H1 (cell line): ENCODE measurements at regions of chr12 and their contacts with region 1.

Region 1: GRCh38 chr12:101839324-101840283 is 8.8 kb upstream of the GNPTAB start:
- DNase-seq: peak in 1 of 2 experiments; percentile 81
- H3K4me3 ChIP-seq: no peak overlapping the region
- H3K27ac ChIP-seq: no peak overlapping the region
- H3K4me1 ChIP-seq: no peaks in the 10 kb centered on the region
- H3K27me3 ChIP-seq: no peaks in the 10 kb centered on the region
- CTCF ChIP-seq: peak; percentile 60 to 74 (median 66)
- EP300 ChIP-seq: no peak
- POLR2A ChIP-seq: no peak
- RAD21 ChIP-seq: peak; percentile 76 to 77

Region 2: DNA sequence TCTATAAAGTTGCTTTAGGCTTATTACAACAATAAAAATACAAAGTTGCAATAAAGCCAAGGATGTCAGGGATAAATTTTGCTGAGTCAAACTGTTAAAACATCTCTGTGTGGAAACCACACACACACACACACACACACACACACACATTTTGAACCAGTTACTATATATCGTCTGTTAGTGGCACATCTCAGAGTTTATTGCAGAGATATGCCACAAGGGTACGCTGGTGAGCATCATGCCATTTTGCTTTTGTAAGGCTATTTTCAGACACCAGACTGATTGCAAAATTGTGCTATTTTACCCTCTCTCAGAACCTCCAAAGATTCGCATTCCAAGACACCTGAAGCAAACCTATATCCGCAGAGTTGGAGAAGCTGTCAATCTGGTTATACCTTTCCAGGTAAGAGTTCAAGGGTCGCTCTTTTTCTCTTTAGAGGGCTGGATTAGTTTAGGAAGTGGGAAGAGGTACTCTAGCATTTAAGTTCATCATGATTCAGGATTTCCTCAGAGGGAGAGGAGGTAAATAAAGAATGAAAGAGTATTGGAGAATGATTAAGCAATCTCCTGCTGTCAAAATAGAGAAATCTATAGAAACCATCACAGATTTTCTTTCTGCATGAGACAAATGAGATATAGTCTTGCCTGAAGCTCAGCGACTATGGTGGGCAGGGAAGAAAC is 169.5 kb before region 1 on chr12:
- CTCF ChIA-PET with region 1: no interaction called
- POLR2A ChIA-PET with region 1: no interaction called
- DNase-seq: no peak
- H3K4me3 ChIP-seq: no peak overlapping the region
- H3K27ac ChIP-seq: no peak overlapping the region
- H3K4me1 ChIP-seq: peaks cover 0 to 3% (median 0%) of the 10 kb centered on the region in 4 experiments; a peak in 1 of 7 replicates
- H3K27me3 ChIP-seq: no peaks in the 10 kb centered on the region
- CTCF ChIP-seq: peak in 2 of 3 experiments; percentile 43 to 75; a peak in 3 of 4 replicates
- EP300 ChIP-seq: no peak
- POLR2A ChIP-seq: no peak
- RAD21 ChIP-seq: peak; percentile 57 to 61

Region 3: DNA sequence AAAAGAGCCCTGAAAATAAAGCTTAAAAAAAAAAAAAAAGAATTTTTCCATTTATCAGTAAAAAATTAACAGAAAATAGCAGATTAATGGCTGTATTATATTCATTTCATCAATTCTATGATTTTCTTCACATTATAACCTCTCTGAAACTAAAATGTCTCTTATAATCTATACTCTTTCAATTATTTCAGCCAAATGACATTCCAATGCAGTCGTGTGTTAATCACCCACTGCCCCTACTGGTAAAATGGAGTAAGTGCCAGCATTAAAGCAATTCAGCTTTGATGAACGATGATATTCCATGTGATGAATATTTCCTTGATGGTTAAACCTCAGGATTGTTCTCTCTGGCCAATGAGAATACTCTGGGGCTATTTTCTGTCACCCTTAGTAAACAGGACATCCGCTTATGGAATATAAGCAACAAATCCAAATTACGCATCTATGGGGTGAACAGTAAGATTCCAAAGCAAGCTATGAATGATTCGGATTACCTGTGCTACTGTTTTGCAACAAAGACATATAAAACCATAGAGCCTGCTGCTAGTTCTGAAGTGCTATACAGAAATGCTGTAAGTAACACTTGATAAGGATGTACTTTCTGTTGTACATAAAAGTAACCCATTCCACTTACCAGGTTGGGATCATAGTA is 80.1 kb before region 1 on chr12:
- CTCF ChIA-PET with region 1: interaction called, 11 read pairs
- POLR2A ChIA-PET with region 1: no interaction called
- DNase-seq: no peak
- H3K4me3 ChIP-seq: no peak overlapping the region
- H3K27ac ChIP-seq: no peak overlapping the region
- H3K4me1 ChIP-seq: no peaks in the 10 kb centered on the region
- H3K27me3 ChIP-seq: no peaks in the 10 kb centered on the region
- CTCF ChIP-seq: peak in 2 of 3 experiments; percentile 46 to 74; a peak in 2 of 4 replicates
- EP300 ChIP-seq: no peak
- POLR2A ChIP-seq: no peak
- RAD21 ChIP-seq: peak; percentile 67 to 70

Region 4: GRCh38 chr12:101773650-101774162 is 65.9 kb before region 1 on chr12:
- CTCF ChIA-PET with region 1: interaction called, 114 read pairs
- POLR2A ChIA-PET with region 1: no interaction called
- DNase-seq: peak; percentile 5 to 64
- H3K4me3 ChIP-seq: no peak overlapping the region
- H3K27ac ChIP-seq: no peak overlapping the region
- H3K4me1 ChIP-seq: no peaks in the 10 kb centered on the region
- H3K27me3 ChIP-seq: no peaks in the 10 kb centered on the region
- CTCF ChIP-seq: peak; percentile 34 to 80 (median 79)
- EP300 ChIP-seq: no peak
- POLR2A ChIP-seq: no peak
- RAD21 ChIP-seq: peak; percentile 94 to 95

Region 5: GRCh38 chr12:101792051-101792931 is 47.3 kb before region 1 on chr12:
- CTCF ChIA-PET with region 1: interaction called, 13 read pairs
- POLR2A ChIA-PET with region 1: interaction called, 3 read pairs
- DNase-seq: no peak
- H3K4me3 ChIP-seq: no peak overlapping the region
- H3K27ac ChIP-seq: no peak overlapping the region
- H3K4me1 ChIP-seq: no peaks in the 10 kb centered on the region
- H3K27me3 ChIP-seq: no peaks in the 10 kb centered on the region
- CTCF ChIP-seq: peak in 1 of 3 experiments; percentile 31; a peak in 1 of 4 replicates
- EP300 ChIP-seq: no peak
- POLR2A ChIP-seq: no peak
- RAD21 ChIP-seq: no peak

Region 6: DNA sequence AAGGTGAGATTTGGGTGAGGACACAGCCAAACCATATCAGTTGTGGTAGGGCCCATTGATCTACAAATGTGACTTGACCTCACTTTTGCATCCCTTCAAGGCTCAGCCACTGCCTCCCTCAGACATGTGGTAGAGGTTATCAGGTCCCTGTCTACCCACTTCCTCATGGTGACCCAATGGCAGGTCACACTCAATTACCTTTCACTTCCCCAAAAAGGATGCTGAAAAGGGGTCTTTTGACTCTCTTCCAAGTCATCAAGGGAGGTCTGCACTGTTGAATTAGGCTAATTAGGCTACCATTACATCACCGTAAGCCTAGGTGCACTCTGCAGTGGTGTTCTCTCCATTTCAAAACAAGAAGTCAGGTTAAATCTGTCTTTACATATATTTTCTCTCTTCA is 15.1 kb after region 1 on chr12:
- CTCF ChIA-PET with region 1: interaction called, 10 read pairs
- POLR2A ChIA-PET with region 1: no interaction called
- DNase-seq: no peak
- H3K4me3 ChIP-seq: no peak overlapping the region
- H3K27ac ChIP-seq: no peak overlapping the region
- H3K4me1 ChIP-seq: no peaks in the 10 kb centered on the region
- H3K27me3 ChIP-seq: no peaks in the 10 kb centered on the region
- CTCF ChIP-seq: no peak
- EP300 ChIP-seq: no peak
- POLR2A ChIP-seq: no peak
- RAD21 ChIP-seq: no peak

Region 7: DNA sequence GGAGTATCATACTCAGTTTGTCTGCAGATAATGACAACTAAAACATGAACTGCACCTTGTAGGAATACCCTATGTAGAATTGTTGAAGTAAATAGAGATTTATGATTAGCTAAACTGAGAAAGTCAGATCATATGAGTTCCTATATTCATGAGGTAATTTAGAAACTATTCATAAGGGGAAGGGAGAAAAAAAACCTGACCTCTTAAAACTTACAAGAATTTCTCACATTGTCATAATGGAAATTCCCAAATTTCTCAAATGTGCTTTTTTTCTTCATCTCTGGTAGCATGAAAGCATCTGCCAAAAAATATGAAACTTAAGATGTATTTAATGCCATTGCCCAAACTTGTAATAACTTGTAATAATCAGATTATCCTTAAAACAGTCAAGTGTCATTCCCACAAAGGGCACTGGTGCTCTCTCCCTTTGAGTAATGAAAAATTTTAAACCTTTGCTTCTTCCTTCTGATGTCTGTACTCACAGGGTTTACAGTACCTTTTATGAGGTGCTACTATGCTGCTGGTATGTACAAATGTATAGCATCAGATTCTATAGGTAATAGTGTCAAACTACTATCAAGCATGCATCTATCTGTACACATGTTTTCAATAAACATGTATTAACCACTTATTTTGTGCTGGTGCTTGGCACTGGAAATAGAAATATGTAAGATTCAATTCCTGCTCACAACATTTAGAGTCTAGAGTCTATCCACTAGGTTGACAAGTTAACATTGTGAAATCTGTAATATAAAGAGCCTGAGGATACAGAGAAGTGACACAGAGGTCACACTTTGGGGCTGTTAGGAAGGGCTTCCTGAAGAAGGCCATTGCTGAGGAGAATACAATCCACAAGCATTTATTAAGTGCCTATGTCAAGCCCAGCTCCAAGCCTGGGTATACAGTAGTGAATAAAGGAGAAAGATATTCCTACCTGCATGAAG is 20.3 kb after region 1 on chr12:
- CTCF ChIA-PET with region 1: interaction called, 11 read pairs
- POLR2A ChIA-PET with region 1: no interaction called
- DNase-seq: no peak
- H3K4me3 ChIP-seq: no peak overlapping the region
- H3K27ac ChIP-seq: no peak overlapping the region
- H3K4me1 ChIP-seq: no peaks in the 10 kb centered on the region; a peak in 1 of 7 replicates
- H3K27me3 ChIP-seq: no peaks in the 10 kb centered on the region
- CTCF ChIP-seq: no peak
- EP300 ChIP-seq: no peak
- POLR2A ChIP-seq: no peak
- RAD21 ChIP-seq: no peak

Region 8: GRCh38 chr12:101909646-101910045 is 70.0 kb after region 1 on chr12:
- CTCF ChIA-PET with region 1: no interaction called
- POLR2A ChIA-PET with region 1: no interaction called
- DNase-seq: no peak
- H3K4me3 ChIP-seq: no peak overlapping the region
- H3K27ac ChIP-seq: no peak overlapping the region
- H3K4me1 ChIP-seq: peaks cover 0 to 10% (median 2%) of the 10 kb centered on the region in 4 experiments; a peak in 2 of 7 replicates
- H3K27me3 ChIP-seq: no peaks in the 10 kb centered on the region
- CTCF ChIP-seq: no peak
- EP300 ChIP-seq: no peak
- POLR2A ChIP-seq: no peak
- RAD21 ChIP-seq: no peak

Region 9: DNA sequence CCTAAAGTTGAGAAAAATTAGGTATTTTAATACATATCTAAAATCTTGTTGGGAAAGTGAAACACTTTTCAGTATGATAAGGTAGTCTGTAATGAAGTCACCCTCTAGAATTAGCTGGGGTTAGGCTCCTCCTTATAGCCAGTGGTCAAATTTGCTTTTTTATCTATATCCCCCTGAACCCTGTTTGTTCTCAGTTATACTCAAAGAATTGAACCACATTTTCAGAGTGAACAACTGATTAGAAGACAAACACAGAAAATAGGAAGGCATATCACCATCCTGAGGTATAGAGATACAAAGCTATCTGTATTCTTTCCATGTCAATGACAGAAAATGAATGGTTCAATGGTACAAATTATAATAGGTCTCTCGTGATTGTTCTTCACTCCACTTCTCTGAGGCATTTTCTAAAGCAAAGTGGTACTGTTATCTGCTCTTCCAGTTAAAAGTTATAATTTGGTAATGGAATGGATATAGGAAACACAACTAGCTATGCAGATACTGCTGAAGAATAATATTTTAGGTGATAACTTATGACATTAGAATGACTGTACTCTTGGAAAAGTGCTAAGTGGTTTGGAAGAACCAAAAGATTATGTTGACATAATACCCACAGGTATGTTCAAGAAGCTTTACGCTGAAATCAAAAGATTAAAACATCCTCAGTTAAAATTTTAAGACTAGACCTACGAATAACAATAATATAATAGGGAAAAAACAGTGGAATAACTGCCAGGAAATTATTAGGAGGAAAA is 194.6 kb after region 1 on chr12:
- CTCF ChIA-PET with region 1: no interaction called
- POLR2A ChIA-PET with region 1: no interaction called
- DNase-seq: no peak
- H3K4me3 ChIP-seq: no peak overlapping the region
- H3K27ac ChIP-seq: no peak overlapping the region
- H3K4me1 ChIP-seq: no peaks in the 10 kb centered on the region
- H3K27me3 ChIP-seq: no peaks in the 10 kb centered on the region
- CTCF ChIP-seq: no peak
- EP300 ChIP-seq: no peak
- POLR2A ChIP-seq: no peak
- RAD21 ChIP-seq: no peak